T-cell (primary cell): ENCODE measurements at regions of chr4 and their contacts with region 1.

Region 1: GRCh38 chr4:159425745-159426305 is 322.9 kb downstream of the RAPGEF2 start:
- DNase-seq: no peak
- ATAC-seq: no peak
- H3K4me3 ChIP-seq: no peak overlapping the region
- H3K4me3 Mint-ChIP-seq: no peak overlapping the region
- H3K27ac ChIP-seq: no peak overlapping the region
- H3K27ac Mint-ChIP-seq: no peak overlapping the region
- H3K4me1 ChIP-seq: no peaks in the 10 kb centered on the region
- H3K4me1 Mint-ChIP-seq: peaks cover 0 to 5% (median 0%) of the 10 kb centered on the region in 3 donors
- H3K27me3 ChIP-seq: no peaks in the 10 kb centered on the region
- H3K27me3 Mint-ChIP-seq: no peaks in the 10 kb centered on the region

Region 2: DNA sequence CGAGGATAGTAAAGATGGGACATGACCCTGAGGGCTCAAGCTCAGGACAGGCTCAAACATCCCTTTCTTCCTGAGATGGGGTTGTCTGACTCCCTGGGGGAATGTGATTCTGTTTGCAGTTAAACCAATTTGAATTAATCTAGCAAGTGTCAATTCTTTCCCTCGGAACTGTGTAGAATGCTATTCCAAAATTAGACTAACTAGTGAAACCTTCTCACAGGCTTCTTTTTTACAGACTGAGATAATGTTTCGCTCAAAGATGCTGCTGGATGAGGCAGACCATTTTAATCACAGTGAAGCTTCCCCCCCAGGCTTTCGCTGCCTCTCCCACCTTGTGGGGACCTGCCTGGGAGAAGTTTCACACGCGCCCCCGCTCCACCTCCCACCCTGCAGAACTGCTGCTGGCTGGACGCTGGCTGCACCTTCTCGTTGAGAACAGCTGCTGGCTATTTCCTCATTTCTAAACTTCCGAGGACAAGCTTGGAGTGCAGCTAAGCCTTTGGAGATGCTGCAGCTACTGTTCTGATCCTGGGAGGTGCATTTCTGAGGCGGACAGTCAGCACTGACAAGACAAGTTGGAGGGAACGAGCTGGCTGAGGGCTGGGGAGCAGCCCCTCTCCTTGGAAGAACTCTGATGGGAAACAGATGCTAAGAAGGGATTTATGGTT is 25.1 kb before region 1 on chr4:
- CTCF ChIA-PET with region 1: interaction called in 1 of 2 experiments, 11 read pairs
- POLR2A ChIA-PET with region 1: no interaction called
- DNase-seq: no peak
- ATAC-seq: no peak
- H3K4me3 ChIP-seq: no peak overlapping the region
- H3K4me3 Mint-ChIP-seq: no peak overlapping the region
- H3K27ac ChIP-seq: no peak overlapping the region
- H3K27ac Mint-ChIP-seq: no peak overlapping the region
- H3K4me1 ChIP-seq: no peaks in the 10 kb centered on the region
- H3K4me1 Mint-ChIP-seq: peaks cover 0 to 15% (median 3%) of the 10 kb centered on the region in 3 donors
- H3K27me3 ChIP-seq: peaks cover 0 to 12% of the 10 kb centered on the region in 2 experiments
- H3K27me3 Mint-ChIP-seq: peaks cover 13% of the 10 kb centered on the region in 2 donors